ENCODE measurements at regions of chr4 and their contacts with region 1.

Region 1: DNA sequence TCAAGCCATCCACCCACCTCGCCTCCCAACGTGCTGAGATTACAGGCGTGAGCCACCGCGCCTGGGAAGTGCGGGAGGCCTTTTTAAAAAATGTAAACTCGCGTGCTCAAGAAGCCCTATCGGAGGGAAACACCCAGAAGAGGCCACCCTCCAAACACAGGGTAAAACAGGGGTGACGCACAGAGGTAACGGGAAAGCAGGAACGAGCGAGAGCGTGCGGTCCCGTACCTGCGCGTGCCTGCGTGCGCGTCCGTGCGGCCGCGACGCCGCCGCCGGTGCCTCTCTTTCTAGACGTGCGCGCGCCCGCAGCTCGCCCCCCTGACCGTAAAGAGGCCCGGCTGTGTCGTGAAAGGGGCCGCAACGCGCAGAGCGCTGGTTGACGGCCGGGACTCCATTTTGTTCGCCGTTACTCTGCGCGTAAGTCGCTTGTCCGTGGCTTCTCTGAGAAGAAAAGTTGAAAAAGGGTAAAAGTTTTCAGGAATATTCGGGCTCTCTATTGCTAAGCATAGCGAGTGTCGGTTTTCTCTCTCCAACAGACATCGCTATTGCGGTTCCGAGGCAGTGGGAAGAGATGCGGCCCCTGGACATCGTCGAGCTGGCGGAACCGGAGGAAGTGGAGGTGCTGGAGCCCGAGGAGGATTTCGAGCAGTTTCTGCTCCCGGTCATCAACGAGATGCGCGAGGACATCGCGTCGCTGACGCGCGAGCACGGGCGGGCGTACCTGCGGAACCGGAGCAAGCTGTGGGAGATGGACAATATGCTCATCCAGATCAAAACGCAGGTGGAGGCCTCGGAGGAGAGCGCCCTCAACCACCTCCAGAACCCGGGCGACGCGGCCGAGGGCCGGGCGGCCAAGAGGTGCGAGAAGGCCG is at the start of gene MRFAP1:
- DNase-seq: peak; percentile 97
- H3K4me3 Mint-ChIP-seq: peak within 1 kb of the TSS; percentile 100
- H3K27ac Mint-ChIP-seq: peak within 1 kb of the TSS; percentile 99
- H3K4me1 Mint-ChIP-seq: peaks cover 29% of the 10 kb centered on the region
- H3K27me3 Mint-ChIP-seq: no peaks in the 10 kb centered on the region
- total RNA-seq, gene MRFAP1: 122 to 130 TPM

Region 2: GRCh38 chr4:5785806-5786680 is 854.5 kb before region 1 on chr4:
- CTCF ChIA-PET with region 1: no interaction called
- POLR2A ChIA-PET with region 1: no interaction called
- intact Hi-C with region 1: no loop called
- DNase-seq: no peak
- H3K4me3 Mint-ChIP-seq: no peak overlapping the region
- H3K27ac Mint-ChIP-seq: no peak overlapping the region
- H3K4me1 Mint-ChIP-seq: no peaks in the 10 kb centered on the region
- H3K27me3 Mint-ChIP-seq: peaks cover 2% of the 10 kb centered on the region

Region 3: GRCh38 chr4:6574747-6575502 is 65.6 kb before region 1 on chr4 and contains the start of gene MAN2B2:
- CTCF ChIA-PET with region 1: interaction called, 3 read pairs
- POLR2A ChIA-PET with region 1: interaction called, 10 read pairs
- intact Hi-C with region 1: loop called (anchors 1 kb)
- DNase-seq: peak; percentile 90
- H3K4me3 Mint-ChIP-seq: peak within 1 kb of the TSS; percentile 80
- H3K27ac Mint-ChIP-seq: peak within 1 kb of the TSS; percentile 73
- H3K4me1 Mint-ChIP-seq: peaks cover 6% of the 10 kb centered on the region
- H3K27me3 Mint-ChIP-seq: no peaks in the 10 kb centered on the region
- total RNA-seq, gene MAN2B2: 16.5 to 18.0 TPM

Region 4: DNA sequence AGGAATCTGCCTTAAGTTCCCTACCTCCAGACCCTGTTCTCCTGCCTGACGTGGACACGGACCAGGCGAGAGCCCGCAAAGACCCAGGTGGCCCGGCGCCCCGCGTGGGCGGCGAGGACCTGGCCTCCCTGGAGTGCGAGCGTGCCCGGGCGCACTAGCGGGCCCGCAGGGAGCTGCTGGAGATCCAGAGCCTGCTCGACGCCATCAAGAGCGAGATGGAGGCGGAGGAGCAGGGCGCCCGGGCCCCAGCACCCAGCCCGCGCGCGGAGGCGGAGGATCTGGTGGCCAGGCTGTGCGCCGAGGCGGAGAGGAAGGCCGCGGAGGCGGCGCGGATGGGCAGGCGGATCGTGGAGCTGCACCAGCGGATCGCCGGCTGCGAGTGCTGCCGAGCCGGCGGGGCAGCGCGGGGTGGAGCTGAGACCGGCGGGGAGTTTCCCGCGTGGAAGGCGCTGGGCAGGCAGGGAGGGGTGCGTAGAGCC is 18.1 kb after region 1 on chr4:
- CTCF ChIA-PET with region 1: interaction called, 9 read pairs
- POLR2A ChIA-PET with region 1: interaction called, 5 read pairs
- intact Hi-C with region 1: loop called (anchors 2 kb)
- DNase-seq: peak; percentile 63
- H3K4me3 Mint-ChIP-seq: peak overlapping the region; percentile 54
- H3K27ac Mint-ChIP-seq: no peak overlapping the region
- H3K4me1 Mint-ChIP-seq: peaks cover 18% of the 10 kb centered on the region
- H3K27me3 Mint-ChIP-seq: no peaks in the 10 kb centered on the region

Region 5: DNA sequence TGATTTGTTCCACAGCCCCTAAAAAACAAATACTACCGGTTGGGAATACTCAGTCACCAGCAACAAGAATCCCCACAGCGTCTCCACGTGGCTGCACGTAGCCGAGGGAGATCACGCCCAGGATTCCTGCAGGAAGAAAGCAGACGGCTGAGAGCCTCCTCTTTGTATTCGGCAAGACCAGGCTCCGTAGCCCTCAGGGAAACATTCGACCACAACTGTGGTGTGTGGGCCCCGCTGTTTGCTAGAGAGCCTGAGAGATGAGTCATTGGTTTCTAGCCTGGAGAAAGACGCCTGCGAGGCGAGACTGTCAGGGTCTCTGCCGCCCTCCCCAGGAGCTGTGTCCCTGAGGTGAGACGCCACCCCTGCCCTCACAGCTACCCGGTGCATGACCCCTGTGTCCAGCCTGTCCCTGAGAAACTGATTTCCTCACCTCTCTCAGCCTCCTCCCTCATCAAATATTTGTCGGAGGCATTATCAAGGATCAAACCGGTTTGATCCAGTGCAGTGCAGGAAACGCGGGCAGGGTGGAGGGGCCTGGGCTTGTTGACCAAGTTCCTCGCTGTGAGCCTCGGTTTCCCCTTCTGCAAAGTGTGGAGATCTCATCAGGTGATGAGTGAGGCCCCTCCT is 48.5 kb after region 1 on chr4:
- CTCF ChIA-PET with region 1: no interaction called
- POLR2A ChIA-PET with region 1: no interaction called
- intact Hi-C with region 1: loop called (anchors 1 kb)
- DNase-seq: peak; percentile 92
- H3K4me3 Mint-ChIP-seq: peak overlapping the region; percentile 74
- H3K27ac Mint-ChIP-seq: peak overlapping the region; percentile 89
- H3K4me1 Mint-ChIP-seq: peaks cover 77% of the 10 kb centered on the region
- H3K27me3 Mint-ChIP-seq: no peaks in the 10 kb centered on the region

Region 6: DNA sequence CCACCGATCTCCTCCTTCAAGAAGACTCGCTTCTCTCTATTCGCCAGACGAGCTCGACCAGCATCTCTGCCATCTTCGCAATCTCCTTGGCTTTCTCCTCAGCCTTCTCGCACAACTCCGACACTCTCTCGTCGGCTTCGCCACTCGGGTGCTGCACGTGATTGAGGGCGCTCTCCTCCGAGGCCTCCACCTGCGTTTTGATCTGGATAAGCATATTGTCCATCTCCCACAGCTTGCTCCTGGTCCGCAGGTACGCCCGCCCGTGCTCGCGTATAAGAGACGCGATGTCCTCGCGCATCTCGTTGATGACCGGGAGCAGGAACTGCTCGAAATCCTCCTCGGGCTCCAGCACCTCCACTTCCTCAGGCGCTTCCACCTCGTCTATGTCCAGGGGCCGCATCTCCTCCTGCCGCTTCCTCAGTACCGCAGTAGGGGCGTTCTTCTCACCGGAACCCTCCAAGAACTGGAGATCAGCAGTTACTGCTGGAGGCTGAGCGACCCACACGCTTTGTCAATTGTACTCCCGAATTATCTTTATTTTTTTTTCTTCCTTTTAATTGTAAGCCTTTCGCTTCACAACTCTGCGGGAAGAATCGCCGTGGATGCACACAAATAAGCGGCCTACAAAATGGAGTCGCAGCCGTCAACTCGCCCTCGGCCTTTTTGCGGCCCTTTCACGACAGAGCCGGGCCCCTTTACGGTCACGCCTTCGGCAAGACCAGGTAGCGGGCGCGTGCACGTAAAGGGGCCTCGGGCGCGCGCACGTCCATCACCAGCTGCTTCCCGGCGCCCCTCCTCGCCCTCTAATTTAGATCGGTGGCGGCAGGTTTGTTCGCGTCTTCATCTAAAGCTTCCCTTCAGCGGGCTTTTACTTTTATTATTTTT is 68.9 kb after region 1 on chr4 and contains the start of gene MRFAP1L1:
- CTCF ChIA-PET with region 1: interaction called, 3 read pairs
- POLR2A ChIA-PET with region 1: interaction called, 3 read pairs
- intact Hi-C with region 1: loop called (anchors 1 kb)
- DNase-seq: peak; percentile 98
- H3K4me3 Mint-ChIP-seq: peak within 1 kb of the TSS; percentile 99
- H3K27ac Mint-ChIP-seq: peak within 1 kb of the TSS; percentile 95
- H3K4me1 Mint-ChIP-seq: peaks cover 49% of the 10 kb centered on the region
- H3K27me3 Mint-ChIP-seq: no peaks in the 10 kb centered on the region
- total RNA-seq, gene MRFAP1L1: 50.7 to 52.0 TPM

Region 7: GRCh38 chr4:6716018-6716911 is 75.7 kb after region 1 on chr4 and contains the start of gene BLOC1S4:
- CTCF ChIA-PET with region 1: no interaction called
- POLR2A ChIA-PET with region 1: interaction called, 3 read pairs
- intact Hi-C with region 1: loop called (anchors 1 kb)
- DNase-seq: peak; percentile 92
- H3K4me3 Mint-ChIP-seq: peak within 1 kb of the TSS; percentile 90
- H3K27ac Mint-ChIP-seq: peak within 1 kb of the TSS; percentile 97
- H3K4me1 Mint-ChIP-seq: peaks cover 27% of the 10 kb centered on the region
- H3K27me3 Mint-ChIP-seq: peaks cover 3% of the 10 kb centered on the region
- total RNA-seq, gene BLOC1S4: 17.0 to 19.7 TPM

Region 8: DNA sequence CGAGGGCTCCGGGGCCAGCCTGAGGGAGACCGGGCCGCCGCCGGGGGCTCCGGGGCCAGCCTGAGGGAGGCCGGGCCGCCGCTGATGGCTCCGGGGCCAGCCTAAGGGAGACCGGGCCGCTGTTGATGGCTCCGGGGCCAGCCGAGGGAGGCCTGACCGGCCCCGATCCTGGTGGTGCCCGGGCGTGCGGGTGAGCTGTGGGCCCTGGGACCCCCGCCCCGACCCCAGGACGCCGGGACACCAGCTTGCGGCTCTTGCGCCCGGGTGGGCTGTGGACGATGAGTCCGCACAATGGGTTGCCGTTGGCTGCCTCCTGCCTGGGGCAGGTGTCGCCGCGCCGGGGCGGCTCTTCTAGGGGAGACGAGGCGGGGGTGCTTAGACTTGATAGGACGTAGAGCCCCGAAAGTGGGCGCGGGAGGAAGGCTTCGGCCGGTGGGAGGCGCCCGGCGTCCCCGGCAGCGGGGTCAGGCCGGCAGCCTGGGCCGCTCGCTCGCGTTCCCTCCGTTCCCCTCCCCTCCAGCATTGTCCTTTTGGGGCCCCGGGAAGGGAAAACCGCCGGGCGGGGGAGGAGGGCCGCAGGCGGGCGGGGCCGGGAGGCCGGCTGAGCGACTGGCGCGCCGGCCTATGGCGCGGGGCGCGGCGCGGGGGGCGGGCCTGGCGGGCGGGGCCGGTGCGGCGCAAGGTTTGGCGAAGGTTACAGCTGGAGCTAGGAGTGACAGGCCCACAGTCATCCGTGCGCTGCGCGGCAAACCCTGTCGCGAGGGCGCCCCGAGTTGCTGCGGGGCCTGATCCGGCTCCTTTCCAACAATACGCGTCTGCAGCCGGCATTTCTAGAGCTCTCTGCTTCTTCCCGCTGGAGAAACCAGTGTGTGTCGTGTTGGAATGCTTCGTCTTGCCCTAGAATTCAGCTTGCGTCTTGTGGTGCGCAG is 142.8 kb after region 1 on chr4:
- CTCF ChIA-PET with region 1: no interaction called
- POLR2A ChIA-PET with region 1: no interaction called
- intact Hi-C with region 1: loop called (anchors 1 kb)
- DNase-seq: peak; percentile 94
- H3K4me3 Mint-ChIP-seq: peak overlapping the region; percentile 80
- H3K27ac Mint-ChIP-seq: peak overlapping the region; percentile 77
- H3K4me1 Mint-ChIP-seq: peaks cover 47% of the 10 kb centered on the region
- H3K27me3 Mint-ChIP-seq: no peaks in the 10 kb centered on the region

Region 9: GRCh38 chr4:7120341-7120740 is 479.8 kb after region 1 on chr4:
- CTCF ChIA-PET with region 1: no interaction called
- POLR2A ChIA-PET with region 1: no interaction called
- intact Hi-C with region 1: no loop called
- DNase-seq: no peak
- H3K4me3 Mint-ChIP-seq: no peak overlapping the region
- H3K27ac Mint-ChIP-seq: no peak overlapping the region
- H3K4me1 Mint-ChIP-seq: no peaks in the 10 kb centered on the region
- H3K27me3 Mint-ChIP-seq: peaks cover 17% of the 10 kb centered on the region